A673 (cell line): ENCODE measurements at regions of chr7 and their contacts with region 1.

Region 1: GRCh38 chr7:108613112-108613759 is 43.6 kb downstream of the DNAJB9 start:
- DNase-seq: peak; percentile 77
- H3K4me3 ChIP-seq: no peak overlapping the region
- H3K27ac ChIP-seq: no peak overlapping the region
- H3K4me1 ChIP-seq: peaks cover 3% of the 10 kb centered on the region
- H3K27me3 ChIP-seq: no peaks in the 10 kb centered on the region
- CTCF ChIP-seq: peak; percentile 81

Region 2: GRCh38 chr7:108770981-108771745 is 157.9 kb after region 1 on chr7:
- CTCF ChIA-PET with region 1: no interaction called
- POLR2A ChIA-PET with region 1: no interaction called
- intact Hi-C with region 1: loop called (anchors 1 kb)
- DNase-seq: peak; percentile 95
- H3K4me3 ChIP-seq: no peak overlapping the region
- H3K27ac ChIP-seq: peak overlapping the region; percentile 95
- H3K4me1 ChIP-seq: peaks cover 52% of the 10 kb centered on the region
- H3K27me3 ChIP-seq: no peaks in the 10 kb centered on the region
- CTCF ChIP-seq: no peak

Region 3: DNA sequence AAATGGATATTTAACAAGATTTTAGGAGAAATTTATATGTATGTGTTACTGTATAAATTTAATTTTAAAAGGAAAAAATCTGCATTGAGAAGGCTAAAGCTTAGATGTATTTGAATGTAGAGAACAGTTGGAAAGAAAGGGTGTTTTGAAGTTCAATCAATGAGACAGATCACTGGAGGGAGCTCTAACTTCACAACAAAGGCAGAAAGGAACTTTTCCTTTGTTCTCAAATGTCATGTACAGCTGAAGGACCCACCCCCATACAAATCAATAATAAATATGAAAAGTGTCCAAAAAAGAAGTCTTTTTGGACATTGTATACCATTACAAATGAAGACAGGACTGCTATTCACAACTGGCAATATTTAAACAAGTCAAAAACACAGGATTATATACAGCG is 359.8 kb after region 1 on chr7:
- CTCF ChIA-PET with region 1: no interaction called
- POLR2A ChIA-PET with region 1: no interaction called
- intact Hi-C with region 1: loop called (anchors 5 kb)
- DNase-seq: peak; percentile 49
- H3K4me3 ChIP-seq: no peak overlapping the region
- H3K27ac ChIP-seq: no peak overlapping the region
- H3K4me1 ChIP-seq: peaks cover 6% of the 10 kb centered on the region
- H3K27me3 ChIP-seq: no peaks in the 10 kb centered on the region
- CTCF ChIP-seq: peak; percentile 62

Region 4: GRCh38 chr7:110442381-110442837 is 1829.2 kb after region 1 on chr7:
- CTCF ChIA-PET with region 1: no interaction called
- POLR2A ChIA-PET with region 1: no interaction called
- intact Hi-C with region 1: loop called (anchors 10 kb)
- DNase-seq: peak; percentile 56
- H3K4me3 ChIP-seq: no peak overlapping the region
- H3K27ac ChIP-seq: no peak overlapping the region
- H3K4me1 ChIP-seq: no peaks in the 10 kb centered on the region
- H3K27me3 ChIP-seq: no peaks in the 10 kb centered on the region
- CTCF ChIP-seq: peak; percentile 70